ENCODE measurements at regions of chr2 and their contacts with region 1.

Region 1: GRCh38 chr2:45778720-45779171 is 127.3 kb downstream of the PRKCE start:
- DNase-seq: peak; percentile 19 to 76 (median 67)
- ATAC-seq: peak; percentile 91
- H3K4me3 ChIP-seq: no peak overlapping the region
- H3K4me3 Mint-ChIP-seq: peak overlapping the region; percentile 5 to 77 (median 54)
- H3K27ac ChIP-seq: no peak overlapping the region
- H3K27ac Mint-ChIP-seq: peak overlapping the region in 1 of 9 donors; percentile 19
- H3K4me1 ChIP-seq: no peaks in the 10 kb centered on the region
- H3K4me1 Mint-ChIP-seq: peaks cover 0 to 13% (median 6%) of the 10 kb centered on the region in 7 donors
- H3K27me3 ChIP-seq: no peaks in the 10 kb centered on the region
- H3K27me3 Mint-ChIP-seq: no peaks in the 10 kb centered on the region

Region 2: GRCh38 chr2:44981136-44982108 is 797.3 kb before region 1 on chr2:
- CTCF ChIA-PET with region 1: no interaction called
- POLR2A ChIA-PET with region 1: no interaction called
- intact Hi-C with region 1: loop called (anchors 1 to 5 kb)
- DNase-seq: peak; percentile 18 to 62 (median 42)
- ATAC-seq: peak; percentile 64
- H3K4me3 ChIP-seq: no peak overlapping the region
- H3K4me3 Mint-ChIP-seq: peak overlapping the region in 1 of 10 donors; percentile 38
- H3K27ac ChIP-seq: no peak overlapping the region
- H3K27ac Mint-ChIP-seq: no peak overlapping the region
- H3K4me1 ChIP-seq: no peaks in the 10 kb centered on the region
- H3K4me1 Mint-ChIP-seq: peaks cover 0 to 6% (median 0%) of the 10 kb centered on the region in 7 donors
- H3K27me3 ChIP-seq: no peaks in the 10 kb centered on the region
- H3K27me3 Mint-ChIP-seq: peaks cover 19 to 30% (median 20%) of the 10 kb centered on the region in 5 donors

Region 3: GRCh38 chr2:45585267-45585861 is 193.4 kb before region 1 on chr2:
- CTCF ChIA-PET with region 1: no interaction called
- POLR2A ChIA-PET with region 1: no interaction called
- intact Hi-C with region 1: loop called (anchors 1 to 2 kb)
- DNase-seq: peak in 4 of 9 donors; percentile 19 to 31 (median 26)
- ATAC-seq: peak; percentile 84
- H3K4me3 ChIP-seq: no peak overlapping the region
- H3K4me3 Mint-ChIP-seq: no peak overlapping the region
- H3K27ac ChIP-seq: no peak overlapping the region
- H3K27ac Mint-ChIP-seq: no peak overlapping the region
- H3K4me1 ChIP-seq: peaks cover 0 to 5% of the 10 kb centered on the region in 2 donors
- H3K4me1 Mint-ChIP-seq: peaks cover 15 to 31% (median 25%) of the 10 kb centered on the region in 7 donors
- H3K27me3 ChIP-seq: no peaks in the 10 kb centered on the region
- H3K27me3 Mint-ChIP-seq: no peaks in the 10 kb centered on the region

Region 4: GRCh38 chr2:45643543-45644542 is 134.9 kb before region 1 on chr2:
- CTCF ChIA-PET with region 1: interaction called, 45 read pairs
- POLR2A ChIA-PET with region 1: interaction called, 6 read pairs
- intact Hi-C with region 1: loop called (anchors 1 kb)
- DNase-seq: peak; percentile 46 to 86 (median 73)
- ATAC-seq: peak; percentile 99
- H3K4me3 ChIP-seq: peak overlapping the region; percentile 44
- H3K4me3 Mint-ChIP-seq: peak overlapping the region; percentile 16 to 67 (median 50)
- H3K27ac ChIP-seq: no peak overlapping the region
- H3K27ac Mint-ChIP-seq: peak overlapping the region in 2 of 9 donors; percentile 46 to 57
- H3K4me1 ChIP-seq: peaks cover 0 to 9% of the 10 kb centered on the region in 2 donors
- H3K4me1 Mint-ChIP-seq: peaks cover 0 to 18% (median 5%) of the 10 kb centered on the region in 7 donors
- H3K27me3 ChIP-seq: no peaks in the 10 kb centered on the region
- H3K27me3 Mint-ChIP-seq: peaks cover 11 to 37% (median 20%) of the 10 kb centered on the region in 5 donors

Region 5: DNA sequence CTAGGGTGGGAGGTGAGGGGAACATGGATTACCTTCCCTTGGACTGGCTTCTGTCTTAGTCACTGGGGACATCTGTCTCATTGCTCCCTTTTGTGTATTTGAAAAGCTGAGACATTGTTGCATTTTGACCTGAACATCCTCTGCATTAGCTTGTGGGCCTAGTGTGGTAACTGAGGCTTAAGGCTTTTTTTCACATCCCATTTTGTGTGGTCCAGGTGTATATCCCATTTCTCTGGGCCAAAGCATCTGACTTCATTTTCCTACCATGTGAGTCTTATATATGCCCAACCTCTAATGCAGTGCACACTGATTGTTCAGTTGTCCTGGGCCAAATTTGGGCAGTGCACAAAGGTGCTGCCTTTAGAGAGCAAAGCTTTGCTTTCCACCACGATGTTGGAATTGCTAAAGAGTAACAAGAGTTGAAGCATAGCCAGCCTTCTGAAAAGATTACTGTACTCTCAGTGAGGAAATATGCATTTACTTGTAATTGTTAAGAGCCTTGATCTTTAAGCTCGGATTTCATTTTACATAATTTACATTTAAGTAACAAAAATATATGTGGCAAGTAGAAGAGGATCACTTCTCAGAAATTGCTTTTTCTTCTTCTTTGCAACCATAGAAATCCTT is 114.0 kb before region 1 on chr2:
- CTCF ChIA-PET with region 1: interaction called, 10 read pairs
- POLR2A ChIA-PET with region 1: no interaction called
- intact Hi-C with region 1: no loop called
- DNase-seq: no peak
- ATAC-seq: no peak
- H3K4me3 ChIP-seq: no peak overlapping the region
- H3K4me3 Mint-ChIP-seq: no peak overlapping the region
- H3K27ac ChIP-seq: no peak overlapping the region
- H3K27ac Mint-ChIP-seq: no peak overlapping the region
- H3K4me1 ChIP-seq: no peaks in the 10 kb centered on the region
- H3K4me1 Mint-ChIP-seq: peaks cover 5 to 21% (median 10%) of the 10 kb centered on the region in 7 donors
- H3K27me3 ChIP-seq: no peaks in the 10 kb centered on the region
- H3K27me3 Mint-ChIP-seq: no peaks in the 10 kb centered on the region

Region 6: GRCh38 chr2:45860136-45861121 is 81.7 kb after region 1 on chr2:
- CTCF ChIA-PET with region 1: interaction called, 3 read pairs
- POLR2A ChIA-PET with region 1: no interaction called
- intact Hi-C with region 1: loop called in 1 of 2 experiments (anchors 2 kb)
- DNase-seq: peak in 8 of 9 donors; percentile 26 to 59 (median 46)
- ATAC-seq: peak; percentile 72
- H3K4me3 ChIP-seq: peak overlapping the region; percentile 64
- H3K4me3 Mint-ChIP-seq: peak overlapping the region; percentile 83 to 95 (median 88)
- H3K27ac ChIP-seq: peak overlapping the region; percentile 71
- H3K27ac Mint-ChIP-seq: peak overlapping the region; percentile 86 to 97 (median 92)
- H3K4me1 ChIP-seq: peaks cover 0 to 40% of the 10 kb centered on the region in 2 donors
- H3K4me1 Mint-ChIP-seq: peaks cover 30 to 63% (median 58%) of the 10 kb centered on the region in 7 donors
- H3K27me3 ChIP-seq: no peaks in the 10 kb centered on the region
- H3K27me3 Mint-ChIP-seq: no peaks in the 10 kb centered on the region

Region 7: GRCh38 chr2:45935791-45936622 is 157.3 kb after region 1 on chr2:
- CTCF ChIA-PET with region 1: interaction called, 5 read pairs
- POLR2A ChIA-PET with region 1: no interaction called
- intact Hi-C with region 1: loop called (anchors 1 kb)
- DNase-seq: peak; percentile 33 to 65 (median 49)
- ATAC-seq: peak; percentile 89
- H3K4me3 ChIP-seq: no peak overlapping the region
- H3K4me3 Mint-ChIP-seq: peak overlapping the region in 1 of 10 donors; percentile 23
- H3K27ac ChIP-seq: no peak overlapping the region
- H3K27ac Mint-ChIP-seq: peak overlapping the region in 2 of 9 donors; percentile 7 to 66
- H3K4me1 ChIP-seq: no peaks in the 10 kb centered on the region
- H3K4me1 Mint-ChIP-seq: peaks cover 0 to 8% (median 0%) of the 10 kb centered on the region in 7 donors
- H3K27me3 ChIP-seq: no peaks in the 10 kb centered on the region
- H3K27me3 Mint-ChIP-seq: no peaks in the 10 kb centered on the region